ENCODE measurements at regions of chr20 and their contacts with region 1.

Region 1: GRCh38 chr20:19368351-19368750 is 155.9 kb downstream of the SLC24A3 start:
- DNase-seq: no peak
- H3K4me3 ChIP-seq: no peak overlapping the region
- H3K27ac ChIP-seq: no peak overlapping the region
- H3K4me1 ChIP-seq: no peaks in the 10 kb centered on the region
- H3K27me3 ChIP-seq: no peaks in the 10 kb centered on the region
- CTCF ChIP-seq: no peak
- EP300 ChIP-seq: no peak
- POLR2A ChIP-seq: no peak

Region 2: GRCh38 chr20:19419396-19419795 is 51.0 kb after region 1 on chr20:
- in situ Hi-C with region 1: no loop called
- intact Hi-C with region 1: loop called (anchors 10 kb)
- DNase-seq: no peak
- H3K4me3 ChIP-seq: no peak overlapping the region
- H3K27ac ChIP-seq: peak overlapping the region in 1 of 4 donors; percentile 21
- H3K4me1 ChIP-seq: no peaks in the 10 kb centered on the region
- H3K27me3 ChIP-seq: no peaks in the 10 kb centered on the region
- CTCF ChIP-seq: no peak
- EP300 ChIP-seq: no peak
- POLR2A ChIP-seq: no peak

Region 3: DNA sequence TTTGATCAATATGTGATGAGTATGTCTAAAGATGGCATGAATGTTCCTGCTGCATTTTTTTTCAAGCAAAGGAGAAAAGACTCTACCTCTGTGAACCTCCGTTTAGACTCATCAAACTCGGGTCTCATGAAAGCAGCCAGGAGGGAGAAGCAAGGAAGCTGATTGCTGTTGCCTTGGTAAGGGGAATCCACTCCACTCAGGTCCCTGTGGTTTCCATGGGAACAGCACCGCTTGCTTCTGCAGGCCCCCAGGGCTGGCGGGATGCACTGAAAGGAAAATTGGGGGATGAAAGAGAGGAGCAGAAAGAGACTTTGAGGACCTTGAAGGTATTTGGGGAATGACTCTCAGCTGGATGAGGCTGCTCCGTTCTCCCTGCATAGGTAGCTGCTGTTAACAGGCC is 140.1 kb after region 1 on chr20:
- in situ Hi-C with region 1: no loop called
- intact Hi-C with region 1: no loop called
- DNase-seq: no peak
- H3K4me3 ChIP-seq: no peak overlapping the region
- H3K27ac ChIP-seq: no peak overlapping the region
- H3K4me1 ChIP-seq: no peaks in the 10 kb centered on the region
- H3K27me3 ChIP-seq: no peaks in the 10 kb centered on the region
- CTCF ChIP-seq: no peak
- EP300 ChIP-seq: no peak
- POLR2A ChIP-seq: no peak

Measured in transverse colon (tissue), 4 donors.